ENCODE measurements at regions of chr5 and their contacts with region 1.

Region 1: DNA sequence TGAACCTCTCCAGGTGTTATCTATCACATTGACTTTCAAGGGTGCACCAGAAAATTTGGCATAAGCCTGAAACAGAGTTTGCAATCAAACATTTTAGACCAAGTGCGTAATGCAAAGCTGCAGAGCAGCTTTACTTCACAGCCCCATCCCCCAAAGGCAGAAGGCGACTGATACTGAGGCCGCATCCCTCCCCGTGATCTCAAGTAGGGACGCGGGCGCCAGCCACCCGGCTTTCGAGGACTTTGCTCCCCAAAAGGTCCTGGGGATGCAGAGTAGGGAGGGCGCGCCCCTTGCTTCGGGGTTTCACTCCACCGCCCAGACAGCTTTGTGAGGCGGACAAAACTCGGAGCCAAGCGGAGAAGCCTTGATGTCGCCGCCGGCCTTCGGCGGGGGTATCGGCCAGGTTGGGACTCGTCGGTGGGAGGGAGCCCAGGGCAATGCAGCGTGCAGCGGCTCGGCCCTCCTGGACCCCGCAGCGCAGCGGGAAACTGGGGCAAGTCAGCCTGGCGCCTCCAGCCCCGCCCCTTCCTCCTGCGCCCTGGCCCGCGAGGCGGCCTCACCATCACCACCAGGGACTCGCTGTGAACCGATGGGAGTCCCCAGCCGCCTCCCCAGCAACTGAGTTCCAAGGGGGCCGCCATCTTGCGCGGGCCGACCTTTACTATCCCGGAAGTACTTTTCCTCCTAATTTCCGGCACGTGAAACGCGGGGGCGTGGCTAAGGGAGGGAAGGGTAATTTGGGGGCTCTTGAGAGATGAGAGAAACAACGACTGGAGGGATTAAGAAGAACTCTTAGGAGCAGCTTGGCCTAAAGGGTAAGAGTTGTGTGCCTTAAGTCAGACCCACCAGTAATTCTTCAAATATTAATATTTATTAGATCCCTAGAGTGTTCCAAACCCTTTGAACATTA is at the start of gene MTX3:
- DNase-seq: peak; percentile 80 to 90 (median 85)
- H3K4me3 ChIP-seq: peak within 1 kb of the TSS; percentile 63 to 75
- H3K4me3 Mint-ChIP-seq: peak within 1 kb of the TSS; percentile 82 to 93 (median 87)
- H3K27ac ChIP-seq: peak within 1 kb of the TSS; percentile 67
- H3K27ac Mint-ChIP-seq: peak within 1 kb of the TSS; percentile 83 to 96 (median 93)
- H3K4me1 ChIP-seq: peaks cover 23% of the 10 kb centered on the region
- H3K4me1 Mint-ChIP-seq: peaks cover 15 to 23% (median 19%) of the 10 kb centered on the region in 4 donors
- H3K27me3 ChIP-seq: no peaks in the 10 kb centered on the region
- H3K27me3 Mint-ChIP-seq: peaks cover 7% of the 10 kb centered on the region in 2 donors
- total RNA-seq, gene MTX3: 22.7 to 22.9 TPM

Region 2: DNA sequence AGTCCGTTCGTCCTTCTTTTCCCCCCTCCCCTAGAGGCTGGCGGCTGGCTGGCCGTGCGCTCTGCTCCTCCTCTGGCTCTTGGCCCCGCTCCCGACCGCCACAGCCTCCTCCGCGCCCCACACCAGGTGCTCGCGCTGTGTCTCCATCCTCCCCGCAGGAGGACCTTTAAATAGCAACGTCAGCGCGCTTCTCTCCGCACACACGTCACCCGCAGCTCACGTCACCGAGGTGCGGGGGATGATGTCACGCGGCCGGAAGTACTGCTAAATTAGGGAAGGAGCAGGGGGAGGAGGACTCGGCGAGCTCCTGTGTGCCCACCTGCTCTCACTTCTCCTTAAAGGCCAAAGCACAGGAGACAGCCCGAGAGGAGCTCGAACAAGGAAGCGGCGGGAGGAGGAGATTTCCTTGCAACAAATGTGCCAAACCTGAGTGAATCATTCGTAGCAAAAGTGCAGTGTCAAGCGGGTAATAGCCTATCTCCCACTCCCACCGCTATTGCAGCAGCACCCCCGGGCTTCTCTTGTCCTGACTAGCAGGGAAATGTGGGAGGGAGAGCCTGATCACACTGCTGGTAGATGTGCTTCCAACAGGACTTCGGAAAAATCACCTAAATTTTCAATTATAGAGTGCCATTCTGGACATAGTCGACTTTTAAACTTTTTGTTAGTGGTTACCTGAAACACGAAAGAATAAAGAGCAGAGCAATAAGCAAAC is 476.3 kb before region 1 on chr5:
- CTCF ChIA-PET with region 1: no interaction called
- POLR2A ChIA-PET with region 1: interaction called, 4 read pairs
- intact Hi-C with region 1: loop called (anchors 5 kb)
- DNase-seq: peak; percentile 90 to 93 (median 92)
- H3K4me3 ChIP-seq: peak overlapping the region; percentile 71 to 84
- H3K4me3 Mint-ChIP-seq: peak overlapping the region; percentile 96 to 99 (median 96)
- H3K27ac ChIP-seq: peak overlapping the region; percentile 82
- H3K27ac Mint-ChIP-seq: peak overlapping the region; percentile 94 to 100 (median 99)
- H3K4me1 ChIP-seq: peaks cover 18% of the 10 kb centered on the region
- H3K4me1 Mint-ChIP-seq: peaks cover 13 to 25% (median 16%) of the 10 kb centered on the region in 4 donors
- H3K27me3 ChIP-seq: peaks cover 9% of the 10 kb centered on the region
- H3K27me3 Mint-ChIP-seq: peaks cover 15 to 18% of the 10 kb centered on the region in 2 donors

Region 3: DNA sequence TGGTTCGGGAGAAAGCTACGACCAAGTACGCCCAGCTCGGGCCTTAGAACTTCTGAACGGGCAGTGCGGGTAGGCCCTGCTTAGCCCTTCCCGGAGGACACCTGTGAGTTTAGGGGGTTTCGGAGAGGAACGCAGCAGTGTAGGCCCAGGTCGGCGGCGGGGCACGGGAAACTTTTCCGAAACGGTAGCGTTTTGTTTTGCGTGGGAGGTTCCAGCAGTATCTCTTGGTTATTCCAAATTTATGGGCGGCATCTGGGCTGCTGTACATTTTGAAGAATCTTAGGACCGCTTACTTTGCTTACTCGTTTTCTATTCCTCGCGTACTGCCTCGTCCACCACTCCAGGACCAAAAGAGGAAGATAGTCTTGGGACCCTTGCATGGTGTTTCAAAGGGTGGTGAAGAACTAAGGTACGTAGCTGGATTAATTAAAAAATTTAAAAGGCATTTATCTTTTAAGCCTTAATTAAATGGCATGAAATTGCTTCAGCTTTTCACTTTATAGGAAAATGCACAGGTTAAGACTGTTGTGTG is 378.1 kb before region 1 on chr5:
- CTCF ChIA-PET with region 1: no interaction called
- POLR2A ChIA-PET with region 1: no interaction called
- intact Hi-C with region 1: loop called (anchors 5 kb)
- DNase-seq: no peak
- H3K4me3 ChIP-seq: peak overlapping the region; percentile 67 to 94
- H3K4me3 Mint-ChIP-seq: peak overlapping the region; percentile 94 to 100 (median 99)
- H3K27ac ChIP-seq: peak overlapping the region; percentile 96
- H3K27ac Mint-ChIP-seq: peak overlapping the region; percentile 98 to 99 (median 98)
- H3K4me1 ChIP-seq: peaks cover 32% of the 10 kb centered on the region
- H3K4me1 Mint-ChIP-seq: peaks cover 24 to 53% (median 36%) of the 10 kb centered on the region in 4 donors
- H3K27me3 ChIP-seq: no peaks in the 10 kb centered on the region
- H3K27me3 Mint-ChIP-seq: peaks cover 0 to 8% of the 10 kb centered on the region in 2 donors

Region 4: GRCh38 chr5:80010754-80011392 is 20.0 kb after region 1 on chr5:
- CTCF ChIA-PET with region 1: no interaction called
- POLR2A ChIA-PET with region 1: no interaction called
- intact Hi-C with region 1: loop called (anchors 2 kb)
- DNase-seq: no peak
- H3K4me3 ChIP-seq: no peak overlapping the region
- H3K4me3 Mint-ChIP-seq: no peak overlapping the region
- H3K27ac ChIP-seq: no peak overlapping the region
- H3K27ac Mint-ChIP-seq: no peak overlapping the region
- H3K4me1 ChIP-seq: no peaks in the 10 kb centered on the region
- H3K4me1 Mint-ChIP-seq: no peaks in the 10 kb centered on the region
- H3K27me3 ChIP-seq: no peaks in the 10 kb centered on the region
- H3K27me3 Mint-ChIP-seq: no peaks in the 10 kb centered on the region

Region 5: DNA sequence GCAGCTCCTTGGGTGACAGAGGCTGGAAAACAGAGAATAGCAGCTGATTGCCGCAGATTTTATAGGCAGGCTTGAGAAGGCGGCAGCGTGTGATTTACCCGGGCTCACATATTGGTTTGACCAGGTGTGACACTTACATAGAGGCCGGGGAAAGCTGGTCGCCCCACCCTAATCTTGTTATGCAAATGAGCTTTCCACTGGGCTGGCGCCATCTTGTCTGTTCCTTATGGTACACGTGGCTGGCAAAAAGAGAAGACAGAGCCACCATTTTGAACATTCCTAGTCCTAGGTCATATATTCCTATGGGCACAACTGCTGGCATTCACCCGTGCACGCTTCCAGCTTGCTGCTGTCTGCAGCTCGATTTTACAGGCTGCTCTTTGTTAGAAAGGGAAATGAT is 317.7 kb after region 1 on chr5:
- CTCF ChIA-PET with region 1: no interaction called
- POLR2A ChIA-PET with region 1: no interaction called
- intact Hi-C with region 1: loop called (anchors 5 kb)
- DNase-seq: no peak
- H3K4me3 ChIP-seq: no peak overlapping the region
- H3K4me3 Mint-ChIP-seq: no peak overlapping the region
- H3K27ac ChIP-seq: no peak overlapping the region
- H3K27ac Mint-ChIP-seq: no peak overlapping the region
- H3K4me1 ChIP-seq: no peaks in the 10 kb centered on the region
- H3K4me1 Mint-ChIP-seq: peaks cover 0 to 1% (median 0%) of the 10 kb centered on the region in 4 donors
- H3K27me3 ChIP-seq: no peaks in the 10 kb centered on the region
- H3K27me3 Mint-ChIP-seq: no peaks in the 10 kb centered on the region

Region 6: DNA sequence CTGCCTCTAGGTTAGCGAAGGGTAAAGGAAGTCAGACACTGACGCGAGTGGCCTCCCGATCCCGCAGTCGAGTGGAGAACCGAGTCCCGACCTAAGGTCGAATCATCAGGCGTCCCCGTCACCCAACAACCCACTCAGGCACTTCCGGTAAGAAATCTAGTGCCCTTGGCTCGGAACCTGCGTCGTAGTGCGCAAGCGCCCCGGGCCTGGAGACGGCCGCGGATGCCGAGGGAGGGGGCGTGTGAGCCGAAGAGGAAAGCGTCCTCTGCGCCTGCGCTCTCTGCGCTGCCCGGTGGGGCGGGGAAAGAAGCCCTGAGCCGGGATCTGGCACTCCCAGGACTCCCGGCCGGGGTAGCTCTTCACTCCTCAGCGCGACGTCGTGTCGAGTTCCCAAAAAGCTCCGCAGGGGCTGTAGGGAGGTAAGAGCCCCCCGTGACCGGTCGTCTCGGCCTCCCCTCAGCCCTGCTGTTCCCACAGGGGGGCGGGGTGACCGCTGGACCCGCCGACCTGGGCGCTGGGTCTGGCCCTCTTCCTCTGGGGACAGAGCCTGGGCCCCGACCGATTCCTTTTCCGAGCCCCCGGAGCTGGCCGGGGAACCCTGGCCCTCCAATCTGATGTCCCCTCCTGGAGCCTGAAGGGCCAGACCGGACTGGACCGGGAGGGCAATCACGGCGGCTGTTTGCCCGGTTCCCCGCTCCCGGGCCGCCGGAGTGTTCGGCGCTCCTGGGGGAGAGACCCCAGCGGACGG is 417.1 kb after region 1 on chr5 and contains the start of gene ZFYVE16:
- CTCF ChIA-PET with region 1: no interaction called
- POLR2A ChIA-PET with region 1: interaction called, 5 read pairs
- intact Hi-C with region 1: loop called (anchors 5 kb)
- DNase-seq: peak; percentile 95 to 97 (median 96)
- H3K4me3 ChIP-seq: peak within 1 kb of the TSS; percentile 73 to 79
- H3K4me3 Mint-ChIP-seq: peak within 1 kb of the TSS; percentile 92 to 98 (median 96)
- H3K27ac ChIP-seq: peak within 1 kb of the TSS; percentile 86
- H3K27ac Mint-ChIP-seq: peak within 1 kb of the TSS; percentile 91 to 100 (median 99)
- H3K4me1 ChIP-seq: peaks cover 22% of the 10 kb centered on the region
- H3K4me1 Mint-ChIP-seq: peaks cover 15 to 24% (median 20%) of the 10 kb centered on the region in 4 donors
- H3K27me3 ChIP-seq: no peaks in the 10 kb centered on the region
- H3K27me3 Mint-ChIP-seq: no peaks in the 10 kb centered on the region
- total RNA-seq, gene ZFYVE16: 23.2 to 25.3 TPM